Heart left ventricle (tissue), 16 donors: ENCODE measurements at regions of chr2 and their contacts with region 1.

Region 1: DNA sequence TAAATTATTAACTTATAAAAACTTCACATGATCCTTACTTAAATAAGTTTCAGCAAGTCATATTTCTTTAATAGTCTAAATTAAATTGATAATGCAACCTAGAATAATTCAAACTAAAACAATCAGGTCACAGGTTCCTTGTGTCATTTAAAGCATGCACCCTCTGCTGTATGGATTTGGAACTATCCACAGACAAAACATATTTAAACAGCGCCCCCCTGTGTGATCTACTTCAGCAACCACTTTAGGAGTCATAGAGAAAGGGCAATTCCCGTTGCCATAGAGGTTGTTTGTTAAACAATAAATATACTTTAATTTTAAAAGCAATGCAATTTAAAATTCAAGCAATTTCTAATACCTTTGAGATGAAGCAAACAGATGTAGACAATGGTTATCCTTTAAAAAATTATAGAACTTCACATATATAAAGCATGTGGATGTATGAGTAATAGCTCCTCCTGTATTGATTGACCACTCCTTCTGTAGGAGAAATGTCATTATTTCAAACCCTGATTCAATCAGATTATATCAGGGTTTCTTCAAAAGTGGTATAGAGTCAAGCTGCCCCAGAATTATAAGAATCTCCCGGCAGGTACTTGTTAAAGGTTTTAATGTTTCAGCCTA is 21.2 kb downstream of the GRB14 start:
- DNase-seq: peak in 2 of 5 donors; percentile 20 to 28
- ATAC-seq: peak in 3 of 4 donors; percentile 78 to 93 (median 81)
- H3K4me3 ChIP-seq: no peak overlapping the region
- H3K27ac ChIP-seq: no peak overlapping the region
- H3K4me1 ChIP-seq: peaks cover 0 to 7% (median 0%) of the 10 kb centered on the region in 12 donors
- H3K27me3 ChIP-seq: no peaks in the 10 kb centered on the region
- CTCF ChIP-seq: peak; percentile 56 to 80 (median 71)
- POLR2A ChIP-seq: no peak

Region 2: DNA sequence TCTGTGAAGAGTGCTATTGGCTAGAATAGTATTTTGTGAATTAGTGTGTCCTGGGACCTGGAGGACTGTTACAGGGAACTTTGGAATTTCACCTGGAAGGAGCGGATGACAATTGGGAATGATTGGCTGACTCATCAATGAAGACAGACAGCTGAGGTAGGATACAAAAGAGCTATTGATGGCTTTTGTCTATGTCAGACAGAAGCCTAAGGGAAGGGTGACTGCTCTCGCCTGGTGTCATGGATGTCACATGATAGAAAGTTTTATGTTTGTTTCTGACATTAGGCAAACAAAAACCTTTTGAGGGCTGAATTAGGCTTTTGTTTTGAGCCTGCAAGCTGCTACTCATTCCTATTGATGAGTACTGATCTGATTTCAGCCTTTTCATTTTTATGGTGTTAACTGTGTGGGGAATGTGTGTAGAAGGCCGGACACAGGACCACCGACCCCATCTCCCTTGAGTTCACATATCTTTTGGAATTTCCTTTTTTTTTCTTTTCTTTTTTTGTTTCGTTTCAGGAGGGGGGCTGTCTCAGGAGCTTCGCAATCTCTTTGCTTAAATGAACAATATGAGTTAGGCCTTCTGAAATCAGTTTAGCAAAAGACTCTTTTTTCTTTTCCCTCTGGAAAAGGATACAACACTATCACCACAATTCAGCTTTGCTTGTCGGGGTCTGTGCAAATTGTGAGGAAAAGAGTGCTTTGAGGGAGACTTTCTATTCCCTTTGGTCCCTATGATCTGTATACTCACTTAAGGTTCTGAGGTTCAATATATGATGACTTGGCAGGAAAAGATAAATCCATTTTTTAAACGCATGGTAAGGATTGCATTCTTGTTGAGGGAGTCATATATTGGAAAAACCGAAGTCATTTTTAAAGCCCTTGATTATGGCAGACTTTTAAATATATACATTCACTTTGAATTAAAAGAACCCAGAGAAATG is 656.4 kb before region 1 on chr2:
- intact Hi-C with region 1: no loop called
- DNase-seq: no peak
- ATAC-seq: no peak
- H3K4me3 ChIP-seq: no peak overlapping the region
- H3K27ac ChIP-seq: no peak overlapping the region
- H3K4me1 ChIP-seq: no peaks in the 10 kb centered on the region
- H3K27me3 ChIP-seq: no peaks in the 10 kb centered on the region
- CTCF ChIP-seq: no peak
- POLR2A ChIP-seq: no peak

Region 3: GRCh38 chr2:164675027-164675426 is 74.9 kb after region 1 on chr2:
- intact Hi-C with region 1: loop called in 1 of 10 experiments (anchors 5 kb)
- DNase-seq: no peak
- ATAC-seq: peak in 1 of 4 donors; percentile 28
- H3K4me3 ChIP-seq: no peak overlapping the region
- H3K27ac ChIP-seq: peak overlapping the region in 4 of 12 donors; percentile 18 to 52 (median 42)
- H3K4me1 ChIP-seq: peaks cover 0 to 17% (median 0%) of the 10 kb centered on the region in 12 donors
- H3K27me3 ChIP-seq: no peaks in the 10 kb centered on the region
- CTCF ChIP-seq: no peak
- POLR2A ChIP-seq: no peak